Pancreas (tissue), 10 donors: ENCODE measurements at regions of chr7 and their contacts with region 1.

Region 1: GRCh38 chr7:98021588-98022351 is 31.8 kb upstream of the OCM2 start:
- DNase-seq: peak; percentile 62 to 98 (median 84)
- ATAC-seq: peak; percentile 96 to 100 (median 98)
- H3K4me3 ChIP-seq: no peak overlapping the region
- H3K27ac ChIP-seq: no peak overlapping the region
- H3K4me1 ChIP-seq: no peaks in the 10 kb centered on the region
- H3K27me3 ChIP-seq: no peaks in the 10 kb centered on the region
- CTCF ChIP-seq: peak; percentile 84 to 95 (median 94)

Region 2: GRCh38 chr7:98168181-98168905 is 146.6 kb after region 1 on chr7:
- intact Hi-C with region 1: loop called in 2 of 3 experiments (anchors 2 to 10 kb)
- DNase-seq: peak in 4 of 6 donors; percentile 64 to 77 (median 72)
- ATAC-seq: peak; percentile 69 to 81 (median 72)
- H3K4me3 ChIP-seq: no peak overlapping the region
- H3K27ac ChIP-seq: peak overlapping the region in 2 of 4 donors; percentile 75 to 83
- H3K4me1 ChIP-seq: peaks cover 25 to 51% (median 31%) of the 10 kb centered on the region in 3 donors
- H3K27me3 ChIP-seq: no peaks in the 10 kb centered on the region
- CTCF ChIP-seq: peak; percentile 58 to 81 (median 74)